Tibial artery (tissue), 4 donors: ENCODE measurements at regions of chr21 and their contacts with region 1.

Region 1: DNA sequence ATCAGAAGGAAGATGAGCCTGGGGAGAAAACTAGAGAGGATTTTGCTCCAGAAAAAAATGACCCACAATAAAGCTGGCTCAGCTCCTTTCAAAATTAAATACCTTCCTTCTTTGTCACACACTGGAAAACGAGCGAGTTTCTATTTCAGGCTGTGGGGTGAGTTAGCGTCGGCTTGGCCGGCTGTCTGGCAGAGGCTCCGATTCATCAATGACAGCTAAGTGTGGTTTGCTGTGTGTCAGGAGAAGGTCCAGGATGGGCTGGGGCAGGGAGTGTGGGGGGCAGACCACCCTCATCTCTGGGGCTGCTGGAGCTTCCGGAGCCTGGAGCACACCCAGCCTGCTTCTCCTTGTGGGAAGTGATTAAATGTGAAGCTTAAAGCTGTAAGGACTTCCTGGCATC is 120.2 kb downstream of the ETS2 start:
- DNase-seq: peak; percentile 72 to 87
- H3K4me3 ChIP-seq: peak overlapping the region; percentile 35 to 50
- H3K27ac ChIP-seq: peak overlapping the region; percentile 77 to 87
- H3K4me1 ChIP-seq: peaks cover 4 to 33% (median 28%) of the 10 kb centered on the region in 4 donors
- H3K27me3 ChIP-seq: no peaks in the 10 kb centered on the region
- CTCF ChIP-seq: no peak

Region 2: GRCh38 chr21:38755681-38756371 is 170.1 kb before region 1 on chr21:
- intact Hi-C with region 1: loop called (anchors 10 kb)
- DNase-seq: peak; percentile 82 to 88
- H3K4me3 ChIP-seq: no peak overlapping the region
- H3K27ac ChIP-seq: peak overlapping the region; percentile 71 to 80
- H3K4me1 ChIP-seq: peaks cover 0 to 90% (median 66%) of the 10 kb centered on the region in 4 donors
- H3K27me3 ChIP-seq: no peaks in the 10 kb centered on the region
- CTCF ChIP-seq: no peak

Region 3: GRCh38 chr21:38853421-38853919 is 72.5 kb before region 1 on chr21:
- intact Hi-C with region 1: no loop called
- DNase-seq: no peak
- H3K4me3 ChIP-seq: no peak overlapping the region
- H3K27ac ChIP-seq: no peak overlapping the region
- H3K4me1 ChIP-seq: peaks cover 0 to 7% (median 0%) of the 10 kb centered on the region in 4 donors
- H3K27me3 ChIP-seq: no peaks in the 10 kb centered on the region
- CTCF ChIP-seq: no peak

Region 4: DNA sequence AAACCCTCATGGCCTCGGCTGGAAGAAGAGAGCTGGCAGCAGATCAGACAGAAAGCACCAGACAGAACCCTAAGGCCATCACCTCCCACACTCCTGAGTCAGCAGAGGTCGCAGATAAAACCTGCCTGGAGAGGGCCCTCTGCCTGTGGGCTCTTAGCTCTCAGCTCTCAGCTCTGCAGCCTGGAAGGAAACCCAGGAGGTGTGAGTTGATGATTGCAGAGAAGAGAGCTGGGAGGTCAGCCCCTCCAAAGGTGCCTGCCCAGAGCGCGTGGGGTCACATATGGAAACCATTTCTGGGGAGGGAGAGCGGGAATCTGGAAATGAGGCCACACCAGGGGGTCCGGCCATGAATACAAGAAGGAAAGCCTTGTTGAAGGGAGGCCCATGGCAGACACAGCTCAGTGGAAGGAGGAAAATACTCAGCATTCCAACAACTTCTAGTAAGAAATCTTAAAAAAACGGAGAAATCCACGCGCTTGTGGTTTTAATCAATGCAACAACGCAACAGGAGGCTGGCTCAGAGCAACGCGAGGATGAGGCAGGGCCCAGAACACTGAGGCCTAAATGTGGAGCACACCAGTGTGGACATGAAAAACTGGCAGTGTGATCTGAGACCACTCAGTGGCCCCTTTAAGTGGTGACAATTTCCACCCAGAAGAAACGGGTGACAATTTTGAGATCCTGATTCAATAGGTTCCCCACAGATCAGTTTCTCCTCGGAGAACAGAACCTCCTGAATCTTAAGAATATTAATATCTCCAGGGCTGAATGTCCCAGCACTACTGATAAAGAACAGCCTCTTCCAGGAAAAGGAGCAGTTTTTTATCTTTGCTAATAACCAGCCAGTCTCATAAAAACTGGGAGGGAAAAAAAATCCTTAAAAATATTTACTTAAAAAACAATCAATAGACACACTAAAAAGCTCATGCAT is 211.6 kb after region 1 on chr21:
- intact Hi-C with region 1: no loop called
- DNase-seq: no peak
- H3K4me3 ChIP-seq: no peak overlapping the region
- H3K27ac ChIP-seq: no peak overlapping the region
- H3K4me1 ChIP-seq: peaks cover 0 to 4% (median 1%) of the 10 kb centered on the region in 4 donors
- H3K27me3 ChIP-seq: no peaks in the 10 kb centered on the region
- CTCF ChIP-seq: no peak

Region 5: GRCh38 chr21:40254540-40255465 is 1328.9 kb after region 1 on chr21:
- intact Hi-C with region 1: no loop called
- DNase-seq: no peak
- H3K4me3 ChIP-seq: no peak overlapping the region
- H3K27ac ChIP-seq: no peak overlapping the region
- H3K4me1 ChIP-seq: no peaks in the 10 kb centered on the region
- H3K27me3 ChIP-seq: no peaks in the 10 kb centered on the region
- CTCF ChIP-seq: no peak